ENCODE measurements at regions of chr17 and their contacts with region 1.

Region 1: DNA sequence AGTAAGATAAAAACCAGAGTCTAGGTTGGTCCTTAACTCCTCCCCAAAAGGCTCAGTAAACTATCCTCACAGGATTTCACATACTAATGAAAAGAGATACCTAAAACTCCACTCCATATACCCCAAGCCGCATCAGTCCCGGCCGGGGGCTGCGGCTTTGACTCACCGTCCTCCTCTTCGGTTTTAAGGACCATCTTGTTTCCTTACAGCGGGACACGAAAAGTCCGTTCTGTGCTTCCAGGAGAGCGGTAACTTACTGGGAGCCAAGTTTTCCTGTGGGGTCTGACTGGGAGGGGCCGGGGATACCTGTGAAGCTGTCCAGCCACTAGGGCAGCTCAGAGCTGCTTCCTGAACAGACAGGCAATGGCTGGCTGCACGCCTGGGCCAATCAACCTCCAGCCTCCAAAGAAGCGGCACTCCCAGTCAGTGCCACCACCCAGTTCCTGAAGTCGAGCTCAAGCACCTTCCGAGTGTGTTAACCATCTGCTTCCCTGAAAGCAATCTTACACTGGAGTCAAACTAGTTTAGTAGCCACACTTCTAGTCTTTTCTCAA is 45.5 kb downstream of the CYTH1 start:
- DNase-seq: peak; percentile 58 to 80
- ATAC-seq: peak; percentile 68 to 78 (median 72)
- H3K4me3 ChIP-seq: peak overlapping the region; percentile 66
- H3K27ac ChIP-seq: peak overlapping the region; percentile 81
- H3K4me1 ChIP-seq: peaks cover 95% of the 10 kb centered on the region
- H3K27me3 ChIP-seq: no peaks in the 10 kb centered on the region
- CTCF ChIP-seq: no peak

Region 2: DNA sequence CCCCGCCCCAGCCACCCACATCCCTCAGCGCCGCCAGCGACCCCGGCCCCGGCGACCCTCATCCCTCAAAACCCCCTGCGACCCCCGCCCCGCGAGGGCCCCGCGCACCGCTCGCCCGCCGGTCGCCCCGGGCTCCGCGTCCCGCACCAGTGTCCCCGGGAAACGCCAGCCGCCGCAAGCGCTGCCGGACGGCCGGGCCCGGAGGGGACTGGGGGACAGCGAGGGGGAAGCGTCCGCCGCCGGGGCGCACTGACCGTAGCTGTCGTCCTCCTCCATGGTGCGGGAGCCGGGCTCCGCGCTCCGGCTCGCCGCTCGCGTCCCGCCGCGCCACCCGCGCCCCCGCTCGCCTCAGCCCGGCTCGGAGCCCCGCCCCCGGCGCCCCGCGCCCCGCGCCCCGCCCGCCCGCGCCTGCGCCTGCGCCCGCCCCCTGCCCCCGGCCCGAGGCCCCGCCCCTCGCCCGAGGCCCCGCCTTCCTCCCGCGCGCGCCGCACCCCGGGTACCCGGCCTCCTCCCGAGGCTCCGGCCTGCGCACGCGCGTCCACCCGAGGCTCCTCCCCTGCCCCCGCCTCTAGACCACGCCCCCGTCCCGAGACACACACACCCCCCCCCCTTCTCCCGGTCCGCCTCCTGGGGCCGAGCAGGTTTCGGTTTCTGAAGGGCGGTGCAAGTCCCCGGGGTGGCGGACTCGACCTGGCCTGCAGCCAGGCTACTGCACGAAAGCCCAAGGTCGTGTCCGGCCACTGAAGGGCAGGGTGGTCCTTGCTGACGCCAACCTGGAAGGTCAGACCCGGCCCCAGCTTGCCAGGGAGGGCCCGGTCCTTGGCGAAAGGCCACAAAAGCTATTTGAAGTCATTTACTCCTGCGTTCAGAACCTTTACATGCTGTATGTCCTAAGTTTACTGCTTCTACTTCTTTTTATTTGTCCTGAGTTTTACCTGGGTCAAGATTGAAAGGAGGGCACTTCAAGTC is 45.6 kb after region 1 on chr17 and contains the start of gene CYTH1:
- intact Hi-C with region 1: loop called (anchors 5 kb)
- DNase-seq: peak; percentile 96 to 98
- ATAC-seq: peak; percentile 91 to 95 (median 92)
- H3K4me3 ChIP-seq: peak within 1 kb of the TSS; percentile 95
- H3K27ac ChIP-seq: peak within 1 kb of the TSS; percentile 95
- H3K4me1 ChIP-seq: peaks cover 17% of the 10 kb centered on the region
- H3K27me3 ChIP-seq: no peaks in the 10 kb centered on the region
- CTCF ChIP-seq: no peak
- total RNA-seq, gene CYTH1: 25.6 to 40.4 (median 34.0) TPM

Measured in psoas muscle (tissue), 8 donors.